B cell (primary cell): ENCODE measurements at regions of chr6 and their contacts with region 1.

Region 1: DNA sequence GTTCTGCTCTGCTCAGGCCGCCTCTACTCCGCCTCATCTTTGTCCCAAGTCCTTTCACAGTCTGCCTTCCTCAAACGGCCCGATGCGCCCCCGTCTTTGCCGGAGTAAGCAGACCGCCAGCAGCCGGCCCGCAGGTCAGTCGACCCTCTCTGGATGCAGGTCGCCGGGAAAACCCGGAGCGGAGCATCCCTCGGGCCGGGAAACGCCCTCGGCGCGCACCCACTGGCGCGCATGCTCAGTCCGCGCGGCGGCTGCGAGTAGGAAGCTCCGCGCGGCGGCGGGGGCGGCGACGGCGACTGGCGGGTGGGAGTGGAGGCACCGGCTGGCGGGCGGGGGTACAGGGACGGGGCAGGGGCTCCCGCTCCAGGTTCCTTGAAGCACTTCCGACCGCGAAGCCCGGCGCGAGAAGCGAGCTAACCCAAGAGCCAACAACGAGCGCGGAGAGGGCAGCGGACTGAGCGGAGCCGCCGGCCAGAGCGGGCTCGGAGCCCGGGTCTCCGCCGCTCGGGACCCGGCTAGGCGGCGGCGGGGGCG is at the start of gene LRRC1:
- DNase-seq: peak; percentile 93
- ATAC-seq: peak; percentile 79
- H3K4me3 ChIP-seq: peak within 1 kb of the TSS; percentile 76 to 91 (median 83)
- H3K4me3 Mint-ChIP-seq: peak within 1 kb of the TSS; percentile 95
- H3K27ac ChIP-seq: peak within 1 kb of the TSS; percentile 30 to 62
- H3K27ac Mint-ChIP-seq: peak within 1 kb of the TSS; percentile 93
- H3K4me1 ChIP-seq: peaks cover 17 to 25% of the 10 kb centered on the region in 2 donors
- H3K4me1 Mint-ChIP-seq: peaks cover 35% of the 10 kb centered on the region
- H3K27me3 ChIP-seq: peaks cover 0 to 3% (median 0%) of the 10 kb centered on the region in 4 experiments
- H3K27me3 Mint-ChIP-seq: peaks cover 6% of the 10 kb centered on the region
- CTCF ChIP-seq: no peak
- total RNA-seq, gene LRRC1: 8.9 and 12.1 TPM in 2 replicates

Region 2: GRCh38 chr6:52670502-52671409 is 1124.0 kb before region 1 on chr6 and contains the start of gene TMEM14A:
- CTCF ChIA-PET with region 1: no interaction called
- POLR2A ChIA-PET with region 1: no interaction called
- intact Hi-C with region 1: loop called (anchors 5 kb)
- DNase-seq: peak; percentile 92
- ATAC-seq: peak; percentile 98
- H3K4me3 ChIP-seq: peak within 1 kb of the TSS; percentile 59 to 86 (median 67)
- H3K4me3 Mint-ChIP-seq: peak within 1 kb of the TSS; percentile 91
- H3K27ac ChIP-seq: no peak within 1 kb of the TSS
- H3K27ac Mint-ChIP-seq: peak within 1 kb of the TSS; percentile 81
- H3K4me1 ChIP-seq: peaks cover 20 to 23% of the 10 kb centered on the region in 2 donors
- H3K4me1 Mint-ChIP-seq: peaks cover 40% of the 10 kb centered on the region
- H3K27me3 ChIP-seq: no peaks in the 10 kb centered on the region
- H3K27me3 Mint-ChIP-seq: no peaks in the 10 kb centered on the region
- CTCF ChIP-seq: no peak
- total RNA-seq, gene TMEM14A: 5.9 and 9.5 TPM in 2 replicates

Region 3: GRCh38 chr6:53544470-53545308 is 250.1 kb before region 1 on chr6 and contains the start of gene GCLC:
- CTCF ChIA-PET with region 1: interaction called, 4 read pairs
- POLR2A ChIA-PET with region 1: interaction called, 4 read pairs
- intact Hi-C with region 1: loop called (anchors 1 kb)
- DNase-seq: peak; percentile 95
- ATAC-seq: peak; percentile 67
- H3K4me3 ChIP-seq: peak within 1 kb of the TSS; percentile 45 to 81 (median 69)
- H3K4me3 Mint-ChIP-seq: peak within 1 kb of the TSS; percentile 97
- H3K27ac ChIP-seq: peak within 1 kb of the TSS in 1 of 2 donors; percentile 68
- H3K27ac Mint-ChIP-seq: peak within 1 kb of the TSS; percentile 93
- H3K4me1 ChIP-seq: peaks cover 22 to 32% of the 10 kb centered on the region in 2 donors
- H3K4me1 Mint-ChIP-seq: peaks cover 52% of the 10 kb centered on the region
- H3K27me3 ChIP-seq: no peaks in the 10 kb centered on the region
- H3K27me3 Mint-ChIP-seq: no peaks in the 10 kb centered on the region
- CTCF ChIP-seq: peak; percentile 81
- total RNA-seq, gene GCLC: 25.8 and 37.8 TPM in 2 replicates

Region 4: GRCh38 chr6:53651764-53652401 is 142.9 kb before region 1 on chr6:
- CTCF ChIA-PET with region 1: no interaction called
- POLR2A ChIA-PET with region 1: no interaction called
- intact Hi-C with region 1: loop called (anchors 5 kb)
- DNase-seq: peak; percentile 87
- ATAC-seq: peak; percentile 83
- H3K4me3 ChIP-seq: peak overlapping the region; percentile 64 to 96 (median 79)
- H3K4me3 Mint-ChIP-seq: peak overlapping the region; percentile 96
- H3K27ac ChIP-seq: peak overlapping the region; percentile 9 to 51
- H3K27ac Mint-ChIP-seq: peak overlapping the region; percentile 90
- H3K4me1 ChIP-seq: peaks cover 20 to 26% of the 10 kb centered on the region in 2 donors
- H3K4me1 Mint-ChIP-seq: peaks cover 20% of the 10 kb centered on the region
- H3K27me3 ChIP-seq: peaks cover 0 to 6% (median 0%) of the 10 kb centered on the region in 4 experiments
- H3K27me3 Mint-ChIP-seq: no peaks in the 10 kb centered on the region
- CTCF ChIP-seq: peak; percentile 24

Region 5: DNA sequence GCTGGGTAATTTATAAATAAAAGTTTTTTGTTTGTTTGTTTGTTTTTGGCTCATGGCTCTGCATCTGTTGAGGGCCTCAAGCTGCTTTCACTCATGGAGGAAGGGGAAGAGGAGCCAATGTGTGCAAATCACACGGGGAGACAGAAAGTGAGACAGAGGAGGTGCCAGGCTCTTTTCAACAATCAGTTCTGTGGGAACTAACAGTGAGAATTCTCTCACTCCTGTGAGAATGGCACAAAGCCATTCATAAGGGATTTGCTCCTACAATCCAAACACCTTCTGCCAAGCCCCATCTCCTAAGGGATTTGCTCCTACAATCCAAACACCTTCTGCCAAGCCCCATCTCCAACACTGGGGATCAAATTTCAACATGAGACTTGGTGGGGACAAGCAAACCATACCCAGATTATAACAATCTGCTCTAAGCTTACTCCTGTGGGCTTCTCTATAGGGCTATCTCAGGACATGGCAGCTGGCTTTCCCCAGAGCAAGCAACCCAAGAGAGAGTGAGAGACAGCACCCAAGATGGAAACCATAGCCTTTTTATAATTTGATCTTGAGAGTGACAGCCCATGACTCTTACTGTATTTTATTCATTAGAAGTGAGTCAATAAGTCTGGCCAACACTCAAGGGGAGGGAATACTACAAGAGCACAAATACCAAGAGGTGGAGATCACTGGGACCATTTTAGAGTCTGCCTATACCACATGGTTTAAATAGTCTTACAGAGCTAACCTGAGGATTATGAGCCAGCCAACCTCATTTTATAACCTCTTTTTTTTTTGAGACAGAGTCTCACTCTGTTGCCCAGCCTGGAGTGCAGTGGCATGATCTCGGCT is 22.8 kb before region 1 on chr6:
- CTCF ChIA-PET with region 1: no interaction called
- POLR2A ChIA-PET with region 1: no interaction called
- intact Hi-C with region 1: loop called (anchors 1 kb)
- DNase-seq: no peak
- ATAC-seq: no peak
- H3K4me3 ChIP-seq: no peak overlapping the region
- H3K4me3 Mint-ChIP-seq: no peak overlapping the region
- H3K27ac ChIP-seq: no peak overlapping the region
- H3K27ac Mint-ChIP-seq: no peak overlapping the region
- H3K4me1 ChIP-seq: no peaks in the 10 kb centered on the region
- H3K4me1 Mint-ChIP-seq: no peaks in the 10 kb centered on the region
- H3K27me3 ChIP-seq: no peaks in the 10 kb centered on the region
- H3K27me3 Mint-ChIP-seq: no peaks in the 10 kb centered on the region
- CTCF ChIP-seq: no peak